ENCODE measurements at regions of chr9 and their contacts with region 1.

Region 1: GRCh38 chr9:111759762-111760639 is 34.7 kb downstream of the SHOC1 start:
- DNase-seq: peak; percentile 50 to 77 (median 56)
- ATAC-seq: peak; percentile 87
- H3K4me3 ChIP-seq: no peak overlapping the region
- H3K27ac ChIP-seq: peak overlapping the region in 2 of 4 donors; percentile 1 to 38
- H3K4me1 ChIP-seq: no peaks in the 10 kb centered on the region
- H3K27me3 ChIP-seq: no peaks in the 10 kb centered on the region
- CTCF ChIP-seq: peak; percentile 48 to 89 (median 84)
- POLR2A ChIP-seq: no peak

Region 2: DNA sequence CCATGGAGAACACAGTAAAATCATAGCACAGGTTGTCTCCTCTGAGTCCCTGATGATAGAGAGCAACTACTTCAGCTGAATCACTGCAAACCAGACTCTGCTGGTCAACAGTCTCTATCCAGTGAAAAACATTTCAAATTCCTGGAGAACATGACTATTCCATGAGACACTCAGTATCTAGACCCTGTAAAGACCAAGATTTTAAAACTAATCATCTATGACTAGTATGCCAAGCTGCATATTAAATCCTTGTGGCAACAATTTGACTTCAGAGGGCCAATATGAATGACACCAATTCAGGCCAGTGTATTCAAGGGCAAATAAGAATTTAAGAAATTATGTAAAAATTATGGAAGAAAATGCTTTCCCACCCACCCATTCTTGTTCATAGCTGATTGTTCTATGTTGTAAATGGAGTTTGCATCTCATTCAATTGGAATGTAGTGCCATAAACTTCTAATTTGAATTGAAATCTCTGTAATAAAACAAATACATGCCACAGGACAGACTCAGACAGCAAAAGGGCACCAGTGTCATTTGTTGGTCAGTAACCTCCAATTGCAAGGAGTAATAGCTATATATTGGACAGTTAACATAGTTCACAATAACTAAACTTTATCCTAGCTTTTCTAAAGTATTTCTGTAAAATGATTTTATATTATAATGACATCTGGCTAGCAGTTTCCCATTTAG is 641.6 kb before region 1 on chr9:
- intact Hi-C with region 1: no loop called
- DNase-seq: no peak
- ATAC-seq: no peak
- H3K4me3 ChIP-seq: no peak overlapping the region
- H3K27ac ChIP-seq: no peak overlapping the region
- H3K4me1 ChIP-seq: no peaks in the 10 kb centered on the region
- H3K27me3 ChIP-seq: no peaks in the 10 kb centered on the region
- CTCF ChIP-seq: no peak
- POLR2A ChIP-seq: no peak

Region 3: GRCh38 chr9:112074250-112075008 is 314.4 kb after region 1 on chr9:
- intact Hi-C with region 1: loop called (anchors 5 kb)
- DNase-seq: peak; percentile 56 to 76 (median 69)
- ATAC-seq: peak; percentile 74
- H3K4me3 ChIP-seq: no peak overlapping the region
- H3K27ac ChIP-seq: peak overlapping the region in 3 of 4 donors; percentile 9 to 60 (median 36)
- H3K4me1 ChIP-seq: peaks cover 24% of the 10 kb centered on the region
- H3K27me3 ChIP-seq: no peaks in the 10 kb centered on the region
- CTCF ChIP-seq: peak; percentile 47 to 94 (median 91)
- POLR2A ChIP-seq: no peak